Activated naive CD8-positive, alpha-beta T cell treated with anti-CD3 and anti-CD28 coated beads, Interleukin-2, amount 10 ng/mL, durations not matched to agents 7 days and 5 days (primary cell): ENCODE measurements at regions of chr3 and their contacts with region 1.

Region 1: GRCh38 chr3:39107388-39108199 is at the starts of genes GORASP1 and TTC21A:
- DNase-seq: peak; percentile 72
- ATAC-seq: peak; percentile 37
- H3K4me3 Mint-ChIP-seq: peak within 1 kb of the TSS; percentile 86
- H3K27ac Mint-ChIP-seq: peak within 1 kb of the TSS; percentile 87
- H3K4me1 Mint-ChIP-seq: peaks cover 40% of the 10 kb centered on the region
- H3K27me3 Mint-ChIP-seq: peaks cover 40% of the 10 kb centered on the region
- total RNA-seq, gene GORASP1: 25.1 to 28.1 TPM
- total RNA-seq, gene TTC21A: 2.7 to 4.5 TPM

Region 2: DNA sequence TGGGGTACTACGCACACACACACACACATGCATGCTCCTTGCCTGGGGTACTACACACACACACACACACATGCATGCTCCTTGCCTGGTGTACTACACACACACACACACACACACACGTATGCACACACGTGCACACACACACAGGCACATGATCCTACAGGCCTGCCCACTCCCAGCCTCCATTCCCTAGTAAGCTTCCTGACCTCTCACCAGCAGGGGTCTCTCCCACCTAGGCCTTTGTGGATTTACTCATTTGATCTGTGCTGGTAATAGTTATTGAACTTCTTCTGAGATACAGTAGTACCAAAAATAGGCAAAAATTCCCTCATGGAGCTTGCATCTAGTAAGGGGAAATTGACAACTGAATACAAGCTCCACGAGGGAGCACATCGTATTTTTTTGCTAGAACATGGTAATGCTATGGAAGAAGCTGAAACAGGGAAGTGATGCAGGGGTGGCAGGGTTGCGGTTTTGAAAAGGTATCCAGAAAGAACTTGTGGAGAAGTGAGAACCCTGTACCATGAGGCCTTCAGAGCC is 19.0 kb after region 1 on chr3:
- POLR2A ChIA-PET with region 1: interaction called, 15 read pairs
- DNase-seq: no peak
- ATAC-seq: peak; percentile 55
- H3K4me3 Mint-ChIP-seq: no peak overlapping the region
- H3K27ac Mint-ChIP-seq: no peak overlapping the region
- H3K4me1 Mint-ChIP-seq: peaks cover 25% of the 10 kb centered on the region
- H3K27me3 Mint-ChIP-seq: peaks cover 22% of the 10 kb centered on the region

Region 3: GRCh38 chr3:39177708-39178332 is 70.2 kb after region 1 on chr3:
- POLR2A ChIA-PET with region 1: interaction called, 12 read pairs
- DNase-seq: peak; percentile 73
- ATAC-seq: peak; percentile 53
- H3K4me3 Mint-ChIP-seq: peak overlapping the region; percentile 69
- H3K27ac Mint-ChIP-seq: peak overlapping the region; percentile 79
- H3K4me1 Mint-ChIP-seq: peaks cover 48% of the 10 kb centered on the region
- H3K27me3 Mint-ChIP-seq: peaks cover 3% of the 10 kb centered on the region

Region 4: GRCh38 chr3:39559543-39559942 is 451.9 kb after region 1 on chr3:
- POLR2A ChIA-PET with region 1: no interaction called
- DNase-seq: no peak
- ATAC-seq: no peak
- H3K4me3 Mint-ChIP-seq: no peak overlapping the region
- H3K27ac Mint-ChIP-seq: no peak overlapping the region
- H3K4me1 Mint-ChIP-seq: no peaks in the 10 kb centered on the region
- H3K27me3 Mint-ChIP-seq: peaks cover 14% of the 10 kb centered on the region